PC-3 (cell line): ENCODE measurements at regions of chr7 and their contacts with region 1.

Region 1: DNA sequence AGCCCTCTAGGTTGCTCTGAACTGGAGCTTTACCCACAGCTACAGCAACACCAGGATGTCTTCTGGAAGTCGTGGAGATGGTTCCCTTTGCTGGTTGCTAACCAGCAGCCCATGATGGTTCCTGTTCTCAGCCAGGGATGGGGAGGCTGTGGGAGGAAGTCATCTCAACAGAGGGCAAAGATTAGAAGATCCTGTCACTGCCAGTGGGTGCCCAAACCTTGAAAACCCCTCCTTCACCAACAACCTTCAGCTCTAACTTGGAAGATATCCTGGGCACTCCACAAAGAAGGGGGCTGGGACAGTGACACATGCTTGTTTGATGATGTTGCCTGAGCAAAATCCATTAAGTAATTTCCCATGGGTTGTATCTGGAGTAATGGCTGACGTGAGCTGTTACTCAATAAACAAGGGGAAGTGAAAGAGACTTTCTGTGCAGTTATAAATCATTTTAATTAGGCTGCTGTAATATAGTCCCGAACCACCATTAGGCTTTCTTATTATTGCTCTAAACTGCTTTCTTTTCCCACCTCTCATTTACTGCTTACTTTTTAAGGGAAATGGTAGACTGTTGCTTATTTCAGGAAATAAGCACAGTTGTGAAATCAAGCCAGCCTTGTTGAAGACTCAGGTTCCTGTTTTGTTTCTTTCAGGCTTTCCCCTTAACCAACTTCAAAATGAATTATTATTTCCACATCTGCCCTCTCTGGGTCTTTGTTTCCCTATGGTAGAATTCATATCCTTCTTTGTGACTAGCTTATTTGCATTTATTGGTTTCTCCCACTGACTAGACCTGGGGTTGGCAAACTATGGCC is 124.8 kb downstream of the PPP1R17 start:
- DNase-seq: peak; percentile 21
- ATAC-seq: no peak
- H3K4me3 ChIP-seq: no peak overlapping the region
- H3K27ac ChIP-seq: peak overlapping the region; percentile 34
- H3K4me1 ChIP-seq: peaks cover 49% of the 10 kb centered on the region
- H3K27me3 ChIP-seq: no peaks in the 10 kb centered on the region
- CTCF ChIP-seq: no peak

Region 2: GRCh38 chr7:31782411-31782991 is 29.4 kb before region 1 on chr7:
- CTCF ChIA-PET with region 1: interaction called, 15 read pairs
- POLR2A ChIA-PET with region 1: no interaction called
- intact Hi-C with region 1: no loop called
- DNase-seq: peak; percentile 92
- ATAC-seq: peak; percentile 80
- H3K4me3 ChIP-seq: no peak overlapping the region
- H3K27ac ChIP-seq: no peak overlapping the region; the same call in 1 of the 2 replicates
- H3K4me1 ChIP-seq: peaks cover 5% of the 10 kb centered on the region; the same call in 1 of the 2 replicates
- H3K27me3 ChIP-seq: no peaks in the 10 kb centered on the region
- CTCF ChIP-seq: peak; percentile 79

Region 3: GRCh38 chr7:31896925-31897324 is 85.1 kb after region 1 on chr7:
- CTCF ChIA-PET with region 1: no interaction called
- POLR2A ChIA-PET with region 1: no interaction called
- intact Hi-C with region 1: loop called (anchors 1 kb)
- DNase-seq: no peak
- ATAC-seq: no peak
- H3K4me3 ChIP-seq: no peak overlapping the region
- H3K27ac ChIP-seq: no peak overlapping the region
- H3K4me1 ChIP-seq: peaks cover 15% of the 10 kb centered on the region
- H3K27me3 ChIP-seq: no peaks in the 10 kb centered on the region
- CTCF ChIP-seq: no peak

Region 4: GRCh38 chr7:32036557-32036956 is 224.7 kb after region 1 on chr7:
- CTCF ChIA-PET with region 1: no interaction called
- POLR2A ChIA-PET with region 1: no interaction called
- intact Hi-C with region 1: loop called (anchors 2 kb)
- DNase-seq: peak; percentile 77
- ATAC-seq: peak; percentile 76
- H3K4me3 ChIP-seq: no peak overlapping the region; the same call in 1 of the 2 replicates
- H3K27ac ChIP-seq: peak overlapping the region; percentile 68
- H3K4me1 ChIP-seq: peaks cover 58% of the 10 kb centered on the region
- H3K27me3 ChIP-seq: no peaks in the 10 kb centered on the region
- CTCF ChIP-seq: no peak

Region 5: DNA sequence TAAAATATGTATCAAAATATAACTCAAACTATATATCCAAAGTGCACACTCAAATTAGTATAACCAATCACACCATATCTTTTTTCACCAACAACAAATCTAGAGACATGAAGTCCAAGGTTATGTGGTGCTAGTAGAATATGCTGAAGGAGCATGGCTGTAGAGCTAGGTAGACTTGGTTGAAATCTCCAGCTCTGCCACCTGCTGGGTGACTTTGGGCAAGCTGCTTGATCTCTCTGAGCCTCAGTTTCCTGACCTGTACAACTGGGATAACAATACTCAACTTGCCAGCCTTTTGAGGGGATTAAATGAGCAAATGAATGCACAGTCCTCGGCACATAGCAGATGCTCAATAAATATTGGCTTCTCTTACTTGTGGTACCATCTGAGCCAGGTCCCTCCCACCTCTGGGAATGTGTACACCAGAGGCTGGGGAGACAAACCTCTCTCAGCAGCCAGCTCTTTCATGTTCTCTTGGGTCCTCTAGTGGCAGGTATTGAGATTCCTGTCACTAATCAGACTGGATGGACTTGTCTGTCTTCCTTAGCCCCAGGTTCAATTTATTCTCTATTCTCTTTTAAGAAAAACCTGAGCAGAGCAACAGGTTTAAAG is 352.6 kb after region 1 on chr7:
- CTCF ChIA-PET with region 1: interaction called, 5 read pairs
- POLR2A ChIA-PET with region 1: no interaction called
- intact Hi-C with region 1: loop called (anchors 1 kb)
- DNase-seq: peak; percentile 85
- ATAC-seq: peak; percentile 53
- H3K4me3 ChIP-seq: no peak overlapping the region
- H3K27ac ChIP-seq: peak overlapping the region; percentile 87; the same call in 1 of the 2 replicates
- H3K4me1 ChIP-seq: peaks cover 39% of the 10 kb centered on the region
- H3K27me3 ChIP-seq: no peaks in the 10 kb centered on the region
- CTCF ChIP-seq: peak; percentile 84